ENCODE measurements at regions of chr1 and their contacts with region 1.

Region 1: GRCh38 chr1:229661022-229661877 is 35.2 kb downstream of the URB2 start:
- DNase-seq: peak; percentile 81
- H3K4me3 ChIP-seq: no peak overlapping the region
- H3K27ac ChIP-seq: no peak overlapping the region
- H3K4me1 ChIP-seq: no peaks in the 10 kb centered on the region
- H3K27me3 ChIP-seq: no peaks in the 10 kb centered on the region
- CTCF ChIP-seq: peak; percentile 85

Region 2: GRCh38 chr1:229470406-229471043 is 190.7 kb before region 1 on chr1:
- intact Hi-C with region 1: no loop called
- DNase-seq: no peak
- H3K4me3 ChIP-seq: no peak overlapping the region
- H3K27ac ChIP-seq: no peak overlapping the region
- H3K4me1 ChIP-seq: no peaks in the 10 kb centered on the region
- H3K27me3 ChIP-seq: no peaks in the 10 kb centered on the region
- CTCF ChIP-seq: no peak

Region 3: GRCh38 chr1:229781453-229781852 is 120.2 kb after region 1 on chr1:
- intact Hi-C with region 1: loop called (anchors 10 kb)
- DNase-seq: peak; percentile 33
- H3K4me3 ChIP-seq: no peak overlapping the region
- H3K27ac ChIP-seq: no peak overlapping the region
- H3K4me1 ChIP-seq: no peaks in the 10 kb centered on the region
- H3K27me3 ChIP-seq: no peaks in the 10 kb centered on the region
- CTCF ChIP-seq: peak; percentile 32

Region 4: DNA sequence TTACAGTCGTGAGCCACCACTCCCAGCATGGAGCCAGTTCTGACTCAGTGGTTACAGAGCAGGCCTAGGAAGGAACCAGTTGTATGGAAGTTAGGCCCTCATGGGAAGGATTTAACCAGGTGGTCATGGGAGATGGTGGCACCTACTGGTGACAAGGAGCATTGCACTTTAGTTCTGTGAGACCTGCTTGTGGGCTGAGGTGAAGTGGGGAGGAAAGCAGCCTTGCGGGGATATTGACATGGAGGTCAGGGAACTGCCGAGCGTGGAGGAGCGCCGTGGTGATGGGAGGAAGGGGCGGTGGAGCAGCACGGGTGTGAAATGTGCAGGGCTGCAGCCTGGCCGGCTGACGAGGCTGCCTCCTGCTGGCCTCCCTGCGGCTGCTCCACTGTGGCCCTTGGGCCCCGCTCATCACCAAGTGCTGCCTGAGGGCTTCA is 506.2 kb after region 1 on chr1:
- intact Hi-C with region 1: loop called (anchors 10 kb)
- DNase-seq: peak; percentile 37
- H3K4me3 ChIP-seq: no peak overlapping the region
- H3K27ac ChIP-seq: no peak overlapping the region
- H3K4me1 ChIP-seq: no peaks in the 10 kb centered on the region
- H3K27me3 ChIP-seq: no peaks in the 10 kb centered on the region
- CTCF ChIP-seq: peak; percentile 77

Region 5: GRCh38 chr1:230310381-230311163 is 649.3 kb after region 1 on chr1:
- intact Hi-C with region 1: loop called (anchors 5 kb)
- DNase-seq: peak; percentile 69
- H3K4me3 ChIP-seq: no peak overlapping the region
- H3K27ac ChIP-seq: no peak overlapping the region
- H3K4me1 ChIP-seq: no peaks in the 10 kb centered on the region
- H3K27me3 ChIP-seq: no peaks in the 10 kb centered on the region
- CTCF ChIP-seq: peak; percentile 81

Measured in colonic mucosa (tissue), 4 donors.